GM12878 (cell line): ENCODE measurements at regions of chr14 and their contacts with region 1.

Region 1: GRCh38 chr14:73418227-73418626 is 40.1 kb downstream of the NUMB start:
- DNase-seq: no peak
- ATAC-seq: no peak
- H3K4me3 ChIP-seq: no peak overlapping the region
- H3K27ac ChIP-seq: no peak overlapping the region
- H3K4me1 ChIP-seq: peaks cover 19% of the 10 kb centered on the region
- H3K27me3 ChIP-seq: no peaks in the 10 kb centered on the region
- CTCF ChIP-seq: no peak
- EP300 ChIP-seq: no peak
- POLR2A ChIP-seq: no peak
- RAD21 ChIP-seq: no peak

Region 2: GRCh38 chr14:73443758-73444157 is 25.5 kb after region 1 on chr14:
- CTCF ChIA-PET with region 1: no interaction called
- POLR2A ChIA-PET with region 1: interaction called, 4 read pairs
- RAD21 ChIA-PET with region 1: interaction called, 3 read pairs
- SMC1A ChIA-PET with region 1: interaction called, 13 read pairs
- in situ Hi-C with region 1: no loop called
- intact Hi-C with region 1: no loop called
- DNase-seq: no peak
- ATAC-seq: no peak
- H3K4me3 ChIP-seq: no peak overlapping the region
- H3K27ac ChIP-seq: no peak overlapping the region
- H3K4me1 ChIP-seq: no peaks in the 10 kb centered on the region
- H3K27me3 ChIP-seq: no peaks in the 10 kb centered on the region
- CTCF ChIP-seq: no peak
- EP300 ChIP-seq: no peak
- POLR2A ChIP-seq: no peak
- RAD21 ChIP-seq: no peak